Activated CD4-positive, alpha-beta memory T cell treated with anti-CD3 and anti-CD28 coated beads for 36 hours (primary cell): ENCODE measurements at regions of chrX and their contacts with region 1.

Region 1: DNA sequence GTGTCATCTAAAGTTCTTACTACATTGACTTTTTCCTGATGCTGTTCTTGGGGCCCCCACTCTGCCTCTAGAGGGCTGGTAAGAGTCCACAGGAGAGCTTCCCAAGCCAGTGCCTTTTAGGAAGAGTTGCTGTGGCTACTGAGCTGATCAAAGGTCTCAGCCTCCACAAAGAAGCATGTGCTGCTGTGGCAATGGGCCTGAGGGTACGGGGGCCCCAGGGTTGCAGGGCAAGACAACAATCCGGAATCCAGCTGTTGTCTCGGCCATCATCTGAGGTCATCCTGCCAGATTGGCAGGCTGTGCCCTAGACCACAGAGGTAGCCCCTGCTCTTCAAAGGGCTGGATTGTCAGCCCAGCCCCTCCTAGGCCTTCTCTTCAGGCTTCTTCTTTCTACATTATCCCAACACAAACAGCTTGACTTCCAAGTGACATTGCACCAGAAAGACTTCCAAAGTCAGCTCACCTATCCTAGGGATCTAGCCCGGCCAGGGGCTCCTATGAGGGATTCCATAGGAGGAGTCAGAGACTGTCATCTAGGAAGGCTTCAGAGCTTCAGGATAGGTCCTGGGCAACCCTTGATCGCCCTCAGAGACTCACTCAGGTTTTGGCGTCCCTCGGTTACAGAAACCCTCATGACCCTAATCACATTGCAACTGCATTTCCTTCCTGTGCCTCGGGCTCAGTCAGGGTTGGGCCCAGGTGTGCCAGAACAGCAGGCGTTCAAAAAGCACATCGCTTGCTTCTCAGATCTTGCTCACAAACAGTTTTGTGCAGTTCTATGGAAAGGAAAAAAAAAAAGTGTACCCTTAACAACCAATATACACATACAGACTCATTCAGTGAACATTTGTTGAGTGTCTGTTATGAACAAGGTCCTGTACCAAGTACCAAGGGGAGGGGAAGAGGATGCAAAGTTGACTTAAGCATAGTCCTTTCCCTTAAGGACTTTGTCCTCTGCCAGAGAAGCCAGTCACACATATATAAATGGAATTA is 27.8 kb downstream of the SLC25A5 start:
- DNase-seq: peak; percentile 28
- H3K4me3 Mint-ChIP-seq: no peak overlapping the region
- H3K27ac Mint-ChIP-seq: peak overlapping the region; percentile 42
- H3K4me1 Mint-ChIP-seq: peaks cover 15% of the 10 kb centered on the region
- H3K27me3 Mint-ChIP-seq: no peaks in the 10 kb centered on the region

Region 2: DNA sequence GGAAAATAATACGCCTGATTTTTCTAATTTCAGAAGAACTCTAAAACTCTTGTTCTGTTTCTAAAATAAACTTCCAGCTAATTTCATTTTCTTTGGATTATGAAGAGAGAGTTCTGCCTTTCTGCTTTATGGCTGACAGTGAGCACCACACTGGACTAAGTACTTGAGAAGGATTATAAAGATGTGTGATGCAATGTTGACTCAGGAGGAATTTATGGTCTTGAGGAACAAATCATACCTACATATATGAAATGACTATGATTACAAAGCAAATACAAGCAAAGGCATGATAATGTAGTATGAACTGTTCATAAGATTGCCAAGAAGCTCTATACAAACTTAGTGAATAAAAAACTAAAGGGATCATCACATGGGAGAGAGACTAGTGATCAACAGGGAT is 40.8 kb before region 1 on chrX:
- CTCF ChIA-PET with region 1: no interaction called
- POLR2A ChIA-PET with region 1: no interaction called
- intact Hi-C with region 1: no loop called
- DNase-seq: no peak
- H3K4me3 Mint-ChIP-seq: no peak overlapping the region
- H3K27ac Mint-ChIP-seq: no peak overlapping the region
- H3K4me1 Mint-ChIP-seq: no peaks in the 10 kb centered on the region
- H3K27me3 Mint-ChIP-seq: no peaks in the 10 kb centered on the region

Region 3: DNA sequence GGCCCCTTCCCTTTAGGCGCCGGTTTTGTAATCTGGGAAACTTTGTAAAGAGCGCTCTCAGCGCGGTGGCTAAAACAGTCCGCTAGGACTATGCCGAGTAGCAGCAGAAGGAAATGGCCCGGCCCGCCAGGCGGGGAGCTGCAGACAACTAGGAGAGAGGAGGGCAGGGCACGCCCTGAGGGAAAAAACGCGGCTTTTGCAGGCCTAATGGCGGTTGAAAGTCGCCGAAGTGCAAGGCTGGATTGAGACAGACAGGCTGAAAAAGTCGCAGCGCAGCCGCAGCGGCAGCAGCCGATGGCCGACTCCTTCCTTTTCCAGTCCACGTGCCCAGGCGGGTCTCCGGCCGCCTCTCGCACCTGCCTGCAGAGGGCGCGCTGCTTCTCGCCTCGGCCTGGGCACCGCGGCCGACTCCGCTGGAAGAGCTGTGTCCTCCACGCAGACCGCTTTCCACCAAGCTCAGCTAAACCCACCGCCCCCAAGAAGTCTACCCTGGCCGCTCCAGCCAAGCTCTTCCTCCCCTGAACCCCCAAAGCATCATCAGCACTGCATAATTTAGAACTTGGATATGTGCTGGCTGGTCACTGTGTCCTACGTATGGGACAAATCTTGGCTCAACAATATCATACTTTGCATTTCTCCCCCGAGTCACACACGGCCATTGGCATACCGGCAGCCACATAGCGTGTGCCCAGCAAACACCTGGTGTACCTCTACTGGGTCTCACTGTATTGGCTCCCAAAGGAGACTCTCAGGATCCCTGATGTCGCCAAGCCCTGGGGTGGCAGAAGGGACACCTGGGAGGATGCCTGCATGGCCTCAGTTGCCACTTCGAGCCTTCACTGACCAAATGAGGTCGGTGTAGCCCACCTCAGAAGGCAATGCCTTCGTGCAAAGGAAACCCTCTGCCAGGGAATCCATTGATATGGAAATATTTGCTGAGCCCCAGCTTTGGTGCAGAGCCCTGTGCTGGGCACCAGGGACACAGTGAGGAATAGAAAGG is 13.2 kb before region 1 on chrX:
- CTCF ChIA-PET with region 1: interaction called, 10 read pairs
- POLR2A ChIA-PET with region 1: no interaction called
- intact Hi-C with region 1: no loop called
- DNase-seq: peak; percentile 77
- H3K4me3 Mint-ChIP-seq: peak overlapping the region; percentile 59
- H3K27ac Mint-ChIP-seq: peak overlapping the region; percentile 45
- H3K4me1 Mint-ChIP-seq: peaks cover 4% of the 10 kb centered on the region
- H3K27me3 Mint-ChIP-seq: no peaks in the 10 kb centered on the region